Naive thymus-derived CD4-positive, alpha-beta T cell (primary cell): ENCODE measurements at regions of chr10 and their contacts with region 1.

Region 1: DNA sequence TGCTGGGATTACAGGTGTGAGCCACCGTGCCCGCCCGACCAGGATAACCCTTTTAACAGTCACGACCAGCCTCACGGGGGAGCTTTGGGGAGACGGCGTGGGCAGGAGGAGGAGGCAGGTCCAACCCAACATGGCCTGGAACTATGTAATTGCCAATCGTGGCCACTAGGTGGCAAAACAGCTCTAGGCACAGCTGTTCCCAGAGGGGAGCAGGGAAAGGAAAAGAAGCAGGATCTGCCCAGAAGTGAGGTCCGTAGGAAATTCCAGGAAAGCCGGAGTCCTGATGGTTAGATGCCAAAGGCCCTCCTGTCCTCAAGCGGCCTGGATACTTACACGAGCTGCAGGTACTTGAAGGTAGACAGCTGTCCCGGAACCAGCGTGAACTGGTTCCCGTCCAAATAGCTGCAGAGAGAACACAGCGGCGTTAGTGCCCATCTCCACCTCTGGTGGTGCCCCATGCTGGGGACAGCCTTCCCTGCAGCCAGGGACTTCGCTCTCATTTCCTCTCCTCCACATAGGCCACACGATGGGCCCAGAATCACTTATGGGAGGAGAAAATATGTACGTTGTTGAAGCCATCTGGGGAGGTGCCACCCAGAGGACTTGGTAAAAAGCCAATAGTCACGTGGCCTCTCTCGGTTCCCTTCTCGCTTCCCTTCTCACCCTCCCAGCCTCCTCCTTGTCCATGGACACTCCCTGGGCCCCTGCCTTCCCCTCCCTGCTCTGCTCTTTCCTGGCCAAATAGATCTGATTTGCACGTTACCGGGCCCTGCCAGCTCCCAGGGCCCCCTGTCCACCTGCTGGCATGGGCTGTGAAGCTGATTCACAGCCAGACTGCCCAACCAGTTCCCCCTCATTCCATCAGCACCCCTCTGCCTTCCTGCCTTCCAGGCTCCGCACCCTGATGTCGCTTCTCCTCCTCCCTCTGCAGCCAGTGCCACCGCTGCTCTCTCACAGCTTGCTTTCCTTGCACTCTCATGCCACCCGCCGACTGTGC is 148.1 kb downstream of the SLIT1 start:
- DNase-seq: peak; percentile 35 to 72 (median 61)
- ATAC-seq: peak; percentile 89
- H3K4me3 ChIP-seq: peak overlapping the region; percentile 66
- H3K4me3 Mint-ChIP-seq: peak overlapping the region; percentile 64 to 85 (median 81)
- H3K27ac ChIP-seq: no peak overlapping the region
- H3K27ac Mint-ChIP-seq: peak overlapping the region in 2 of 9 donors; percentile 63 to 75
- H3K4me1 ChIP-seq: no peaks in the 10 kb centered on the region
- H3K4me1 Mint-ChIP-seq: peaks cover 12 to 20% (median 16%) of the 10 kb centered on the region in 7 donors
- H3K27me3 ChIP-seq: no peaks in the 10 kb centered on the region
- H3K27me3 Mint-ChIP-seq: peaks cover 2 to 13% (median 9%) of the 10 kb centered on the region in 5 donors

Region 2: DNA sequence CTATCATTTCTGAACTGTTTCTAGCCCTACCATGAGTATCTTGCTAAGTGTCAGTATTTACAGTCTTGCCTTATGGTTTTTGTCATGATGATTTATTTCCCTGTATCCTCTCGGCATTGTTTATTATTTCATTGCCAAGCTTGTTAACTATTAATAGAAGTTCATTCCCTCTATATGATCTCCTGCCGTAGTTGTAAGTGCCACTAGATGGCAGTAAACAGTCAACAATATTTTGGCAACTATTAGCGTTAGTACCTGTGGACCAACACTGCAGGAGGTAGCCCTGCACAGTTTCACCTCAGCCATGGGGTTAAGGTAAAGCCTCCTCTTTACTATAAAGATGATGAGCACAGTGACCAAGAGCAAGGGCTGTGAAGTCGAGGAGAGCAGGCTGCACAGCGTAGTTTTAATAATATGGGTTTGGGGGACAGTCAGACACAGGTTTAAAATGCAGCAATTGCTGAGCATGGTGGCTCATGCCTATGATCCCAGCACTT is 1020.4 kb before region 1 on chr10:
- CTCF ChIA-PET with region 1: no interaction called
- POLR2A ChIA-PET with region 1: no interaction called
- intact Hi-C with region 1: no loop called
- DNase-seq: peak in 7 of 9 donors; percentile 17 to 57 (median 53)
- ATAC-seq: peak; percentile 90
- H3K4me3 ChIP-seq: no peak overlapping the region
- H3K4me3 Mint-ChIP-seq: no peak overlapping the region
- H3K27ac ChIP-seq: no peak overlapping the region
- H3K27ac Mint-ChIP-seq: no peak overlapping the region
- H3K4me1 ChIP-seq: no peaks in the 10 kb centered on the region
- H3K4me1 Mint-ChIP-seq: peaks cover 0 to 5% (median 3%) of the 10 kb centered on the region in 7 donors
- H3K27me3 ChIP-seq: peaks cover 0 to 5% of the 10 kb centered on the region in 2 donors
- H3K27me3 Mint-ChIP-seq: peaks cover 8 to 23% (median 14%) of the 10 kb centered on the region in 5 donors

Region 3: DNA sequence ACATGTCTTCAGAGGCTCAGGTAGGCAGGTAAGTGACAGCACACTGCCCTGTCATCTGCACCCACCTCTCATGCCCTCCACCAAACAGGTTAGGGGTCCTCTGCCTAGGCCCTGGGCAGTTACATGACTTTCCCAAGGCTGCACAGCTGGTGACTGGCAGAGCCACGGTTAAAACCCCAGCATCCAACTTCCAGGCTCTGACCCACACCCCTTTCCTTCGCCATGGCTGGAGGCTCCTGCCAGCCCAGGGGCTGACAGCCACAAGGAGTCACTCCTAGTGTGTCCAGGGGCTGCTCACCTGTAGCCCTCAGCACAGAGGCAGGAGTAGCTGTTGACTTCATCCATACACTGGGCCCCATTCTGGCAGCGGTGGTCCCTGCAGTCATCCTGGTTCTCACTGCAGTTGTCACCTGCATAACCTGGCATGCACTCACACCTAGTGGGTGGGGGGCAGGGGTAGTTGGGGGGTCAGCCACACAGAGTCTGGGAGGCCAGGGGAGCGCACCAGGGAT is 26.9 kb before region 1 on chr10:
- CTCF ChIA-PET with region 1: interaction called, 11 read pairs
- POLR2A ChIA-PET with region 1: no interaction called
- intact Hi-C with region 1: no loop called
- DNase-seq: no peak
- ATAC-seq: no peak
- H3K4me3 ChIP-seq: no peak overlapping the region
- H3K4me3 Mint-ChIP-seq: no peak overlapping the region
- H3K27ac ChIP-seq: no peak overlapping the region
- H3K27ac Mint-ChIP-seq: no peak overlapping the region
- H3K4me1 ChIP-seq: no peaks in the 10 kb centered on the region
- H3K4me1 Mint-ChIP-seq: peaks cover 0 to 4% (median 0%) of the 10 kb centered on the region in 7 donors
- H3K27me3 ChIP-seq: no peaks in the 10 kb centered on the region
- H3K27me3 Mint-ChIP-seq: peaks cover 0 to 4% (median under 1%) of the 10 kb centered on the region in 5 donors

Region 4: GRCh38 chr10:97016728-97017473 is 20.8 kb before region 1 on chr10:
- CTCF ChIA-PET with region 1: interaction called, 10 read pairs
- POLR2A ChIA-PET with region 1: no interaction called
- intact Hi-C with region 1: no loop called
- DNase-seq: peak in 1 of 9 donors; percentile 34
- ATAC-seq: no peak
- H3K4me3 ChIP-seq: no peak overlapping the region
- H3K4me3 Mint-ChIP-seq: peak overlapping the region in 5 of 10 donors; percentile 26 to 72 (median 39)
- H3K27ac ChIP-seq: no peak overlapping the region
- H3K27ac Mint-ChIP-seq: peak overlapping the region in 3 of 9 donors; percentile 40 to 83 (median 46)
- H3K4me1 ChIP-seq: peaks cover 0 to 6% of the 10 kb centered on the region in 2 donors
- H3K4me1 Mint-ChIP-seq: peaks cover 0 to 14% (median 8%) of the 10 kb centered on the region in 7 donors
- H3K27me3 ChIP-seq: no peaks in the 10 kb centered on the region
- H3K27me3 Mint-ChIP-seq: no peaks in the 10 kb centered on the region

Region 5: DNA sequence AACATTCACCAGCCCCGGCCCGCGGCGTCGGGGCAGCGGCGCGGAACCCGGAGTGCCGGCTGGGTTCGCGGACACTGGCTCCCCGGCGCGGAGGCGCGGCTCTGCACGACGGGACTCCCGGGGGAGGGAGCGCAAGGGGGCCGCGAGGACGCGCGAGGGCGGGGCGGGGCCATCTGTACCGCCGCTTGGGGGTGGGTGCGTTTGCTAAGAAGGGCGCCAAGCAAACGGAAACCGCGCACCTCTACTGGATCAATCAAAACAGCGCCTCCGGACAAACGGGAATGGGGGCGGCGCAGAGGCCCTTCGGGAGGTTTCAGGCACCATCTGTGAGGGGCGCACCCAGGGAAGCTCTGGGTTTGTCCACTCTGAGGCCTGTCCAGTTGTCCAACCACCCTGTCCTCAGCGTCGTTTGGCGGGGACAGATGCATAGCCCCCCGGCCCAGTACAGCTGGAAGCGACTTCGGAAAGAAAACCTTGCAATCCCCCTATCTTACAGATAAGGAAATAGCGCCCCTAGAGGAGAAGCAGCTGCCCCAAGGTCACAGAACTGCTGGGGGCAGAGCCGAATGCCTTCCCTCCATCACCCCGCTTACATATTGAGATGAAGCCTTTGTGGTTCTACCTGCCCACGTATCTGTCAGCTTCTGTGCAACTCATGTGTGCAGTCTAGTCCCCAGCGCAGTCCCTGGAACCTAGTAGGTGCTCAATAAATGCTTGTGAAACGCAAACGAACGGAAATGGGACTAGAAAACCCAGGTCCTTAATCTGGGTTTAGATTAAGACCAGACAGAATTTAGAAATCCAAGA is 158.8 kb after region 1 on chr10:
- CTCF ChIA-PET with region 1: interaction called, 3 read pairs
- POLR2A ChIA-PET with region 1: no interaction called
- intact Hi-C with region 1: loop called in 1 of 2 experiments (anchors 1 kb)
- DNase-seq: peak; percentile 32 to 73 (median 66)
- ATAC-seq: peak; percentile 91
- H3K4me3 ChIP-seq: peak overlapping the region; percentile 83
- H3K4me3 Mint-ChIP-seq: peak overlapping the region; percentile 83 to 94 (median 87)
- H3K27ac ChIP-seq: peak overlapping the region; percentile 17
- H3K27ac Mint-ChIP-seq: peak overlapping the region in 1 of 9 donors; percentile 30
- H3K4me1 ChIP-seq: peaks cover 6% of the 10 kb centered on the region in 2 donors
- H3K4me1 Mint-ChIP-seq: peaks cover 0 to 14% (median 6%) of the 10 kb centered on the region in 7 donors
- H3K27me3 ChIP-seq: peaks cover 2 to 4% of the 10 kb centered on the region in 2 donors
- H3K27me3 Mint-ChIP-seq: peaks cover 19 to 76% (median 27%) of the 10 kb centered on the region in 5 donors